ENCODE measurements at regions of chr16 and their contacts with region 1.

Region 1: GRCh38 chr16:66483689-66484481 is 56.8 kb downstream of the BEAN1 start:
- DNase-seq: no peak
- H3K4me3 ChIP-seq: no peak overlapping the region
- H3K27ac ChIP-seq: no peak overlapping the region
- H3K4me1 ChIP-seq: peaks cover 12 to 24% (median 22%) of the 10 kb centered on the region in 4 donors
- H3K27me3 ChIP-seq: no peaks in the 10 kb centered on the region
- CTCF ChIP-seq: peak; percentile 85 to 94 (median 91)
- EP300 ChIP-seq: no peak
- POLR2A ChIP-seq: no peak

Region 2: DNA sequence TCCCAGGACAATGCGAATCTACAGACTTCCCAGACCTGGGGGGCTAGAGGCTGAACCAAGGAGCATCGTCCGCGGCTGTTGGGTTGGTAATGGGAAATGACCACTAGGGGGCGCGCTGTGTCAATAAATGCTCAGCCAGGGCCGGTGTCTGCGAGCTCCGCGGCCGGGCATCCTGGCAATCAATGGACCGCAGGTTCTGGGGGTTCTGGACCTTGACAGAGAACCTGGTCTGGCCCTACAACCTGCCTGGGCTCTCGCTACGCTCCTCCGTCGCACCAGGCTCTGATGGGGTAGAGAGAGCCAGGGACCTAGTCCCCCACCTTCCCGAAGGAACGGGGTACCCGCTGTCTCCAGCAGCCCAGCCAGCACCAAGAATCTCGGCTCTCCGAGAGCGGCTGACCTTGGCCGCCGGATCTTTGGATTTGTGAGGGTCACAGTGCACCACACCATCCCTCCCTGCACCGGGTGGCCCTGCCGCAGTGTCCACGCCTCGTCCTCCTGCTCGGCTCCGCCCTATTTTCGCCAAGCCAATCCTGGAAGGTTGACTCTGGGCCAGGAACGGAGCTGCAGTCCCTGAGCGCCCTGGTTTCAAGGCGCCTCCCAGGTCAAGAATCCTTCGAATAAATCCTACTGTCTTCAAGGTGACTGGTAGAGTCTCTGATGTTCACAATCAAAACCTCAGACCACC is 77.2 kb before region 1 on chr16:
- intact Hi-C with region 1: loop called (anchors 1 kb)
- DNase-seq: peak; percentile 98
- H3K4me3 ChIP-seq: peak overlapping the region; percentile 52 to 63 (median 54)
- H3K27ac ChIP-seq: peak overlapping the region in 2 of 4 donors; percentile 35 to 51
- H3K4me1 ChIP-seq: peaks cover 12 to 20% (median 17%) of the 10 kb centered on the region in 4 donors
- H3K27me3 ChIP-seq: peaks cover 0 to 20% (median 0%) of the 10 kb centered on the region in 4 donors
- CTCF ChIP-seq: peak; percentile 83 to 89 (median 86)
- EP300 ChIP-seq: no peak
- POLR2A ChIP-seq: no peak

Region 3: GRCh38 chr16:66588981-66589713 is 105.3 kb after region 1 on chr16:
- intact Hi-C with region 1: loop called (anchors 5 kb)
- DNase-seq: no peak
- H3K4me3 ChIP-seq: no peak overlapping the region
- H3K27ac ChIP-seq: no peak overlapping the region
- H3K4me1 ChIP-seq: peaks cover 0 to 4% (median 0%) of the 10 kb centered on the region in 4 donors
- H3K27me3 ChIP-seq: no peaks in the 10 kb centered on the region
- CTCF ChIP-seq: peak; percentile 30 to 51 (median 38)
- EP300 ChIP-seq: no peak
- POLR2A ChIP-seq: no peak

Measured in esophagus muscularis mucosa (tissue), 4 donors.